ENCODE measurements at regions of chr17 and their contacts with region 1.

Region 1: GRCh38 chr17:7887482-7888183 is 956 bp upstream of the CHD3 start:
- DNase-seq: peak; percentile 73 to 97 (median 87)
- ATAC-seq: peak; percentile 71
- H3K4me3 ChIP-seq: peak overlapping the region; percentile 86 to 89
- H3K4me3 Mint-ChIP-seq: no peak overlapping the region
- H3K27ac ChIP-seq: peak overlapping the region; percentile 61 to 80
- H3K27ac Mint-ChIP-seq: no peak overlapping the region
- H3K4me1 ChIP-seq: peaks cover 30% of the 10 kb centered on the region
- H3K4me1 Mint-ChIP-seq: peaks cover 13% of the 10 kb centered on the region
- H3K27me3 ChIP-seq: no peaks in the 10 kb centered on the region
- H3K27me3 Mint-ChIP-seq: no peaks in the 10 kb centered on the region
- CTCF ChIP-seq: no peak

Region 2: DNA sequence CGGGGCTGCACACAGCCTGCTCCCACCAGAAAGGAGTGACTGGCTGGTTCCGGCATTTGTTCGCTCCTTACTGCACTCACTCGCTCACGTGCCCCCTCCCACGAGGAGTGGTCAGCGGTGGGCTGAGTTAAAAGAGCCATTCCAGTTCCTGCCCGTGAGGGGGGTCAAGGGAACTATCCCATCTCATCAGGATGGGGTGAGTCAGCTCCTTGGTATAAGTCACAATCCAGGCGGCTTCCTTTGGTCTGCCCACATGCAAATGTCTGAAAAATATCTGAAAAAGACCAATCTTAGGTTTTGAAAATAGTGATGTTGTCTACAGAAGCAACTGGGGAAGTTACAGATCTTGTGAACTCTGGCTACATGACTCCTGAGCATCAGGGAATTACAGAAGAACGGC is 348.7 kb before region 1 on chr17:
- CTCF ChIA-PET with region 1: no interaction called
- POLR2A ChIA-PET with region 1: no interaction called
- intact Hi-C with region 1: no loop called
- DNase-seq: no peak
- ATAC-seq: no peak
- H3K4me3 ChIP-seq: no peak overlapping the region
- H3K4me3 Mint-ChIP-seq: no peak overlapping the region
- H3K27ac ChIP-seq: no peak overlapping the region
- H3K27ac Mint-ChIP-seq: no peak overlapping the region
- H3K4me1 ChIP-seq: no peaks in the 10 kb centered on the region
- H3K4me1 Mint-ChIP-seq: no peaks in the 10 kb centered on the region
- H3K27me3 ChIP-seq: peaks cover 0 to 2% of the 10 kb centered on the region in 2 experiments
- H3K27me3 Mint-ChIP-seq: peaks cover 3% of the 10 kb centered on the region
- CTCF ChIP-seq: no peak

Region 3: DNA sequence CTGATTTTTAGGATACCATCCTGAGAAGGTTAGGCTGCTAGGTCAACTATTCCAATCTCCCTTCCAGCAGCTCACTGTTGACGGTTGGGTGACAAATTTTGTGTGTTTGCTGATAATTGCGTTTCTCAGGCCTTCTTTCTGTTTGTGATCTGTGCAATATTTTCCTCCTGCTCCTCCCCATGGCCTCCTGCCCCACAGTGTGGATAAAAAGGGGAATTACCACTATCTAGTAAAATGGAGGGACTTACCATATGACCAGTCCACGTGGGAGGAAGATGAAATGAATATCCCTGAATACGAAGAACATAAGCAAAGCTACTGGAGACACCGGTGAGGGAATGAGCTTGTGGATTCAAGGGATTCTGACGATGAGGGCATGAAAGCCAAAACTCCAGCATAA is 10.1 kb after region 1 on chr17:
- CTCF ChIA-PET with region 1: interaction called, 6 read pairs
- POLR2A ChIA-PET with region 1: no interaction called
- intact Hi-C with region 1: loop called in 1 of 2 experiments (anchors 1 kb)
- DNase-seq: peak in 3 of 9 experiments; percentile 39 to 61 (median 44)
- ATAC-seq: peak; percentile 81
- H3K4me3 ChIP-seq: no peak overlapping the region
- H3K4me3 Mint-ChIP-seq: no peak overlapping the region
- H3K27ac ChIP-seq: no peak overlapping the region
- H3K27ac Mint-ChIP-seq: peak overlapping the region; percentile 75
- H3K4me1 ChIP-seq: no peaks in the 10 kb centered on the region
- H3K4me1 Mint-ChIP-seq: peaks cover 9% of the 10 kb centered on the region
- H3K27me3 ChIP-seq: no peaks in the 10 kb centered on the region
- H3K27me3 Mint-ChIP-seq: no peaks in the 10 kb centered on the region
- CTCF ChIP-seq: peak; percentile 36

Region 4: GRCh38 chr17:7931709-7932482 is 44.3 kb after region 1 on chr17 and contains the starts of genes CNTROB and TRAPPC1:
- CTCF ChIA-PET with region 1: no interaction called
- POLR2A ChIA-PET with region 1: no interaction called
- intact Hi-C with region 1: loop called (anchors 2 to 5 kb)
- DNase-seq: peak; percentile 99 to 100 (median 99)
- ATAC-seq: peak; percentile 93
- H3K4me3 ChIP-seq: peak within 1 kb of the TSS; percentile 96
- H3K4me3 Mint-ChIP-seq: peak within 1 kb of the TSS; percentile 100
- H3K27ac ChIP-seq: peak within 1 kb of the TSS; percentile 85
- H3K27ac Mint-ChIP-seq: peak within 1 kb of the TSS; percentile 99
- H3K4me1 ChIP-seq: peaks cover 22% of the 10 kb centered on the region
- H3K4me1 Mint-ChIP-seq: peaks cover 50% of the 10 kb centered on the region
- H3K27me3 ChIP-seq: no peaks in the 10 kb centered on the region
- H3K27me3 Mint-ChIP-seq: no peaks in the 10 kb centered on the region
- CTCF ChIP-seq: no peak
- total RNA-seq, gene CNTROB: 20.1 to 23.6 TPM
- total RNA-seq, gene TRAPPC1: 29.6 to 39.4 TPM

Measured in CD8-positive, alpha-beta T cell (primary cell).